Sigmoid colon (tissue), 7 donors: ENCODE measurements at regions of chr4 and their contacts with region 1.

Region 1: DNA sequence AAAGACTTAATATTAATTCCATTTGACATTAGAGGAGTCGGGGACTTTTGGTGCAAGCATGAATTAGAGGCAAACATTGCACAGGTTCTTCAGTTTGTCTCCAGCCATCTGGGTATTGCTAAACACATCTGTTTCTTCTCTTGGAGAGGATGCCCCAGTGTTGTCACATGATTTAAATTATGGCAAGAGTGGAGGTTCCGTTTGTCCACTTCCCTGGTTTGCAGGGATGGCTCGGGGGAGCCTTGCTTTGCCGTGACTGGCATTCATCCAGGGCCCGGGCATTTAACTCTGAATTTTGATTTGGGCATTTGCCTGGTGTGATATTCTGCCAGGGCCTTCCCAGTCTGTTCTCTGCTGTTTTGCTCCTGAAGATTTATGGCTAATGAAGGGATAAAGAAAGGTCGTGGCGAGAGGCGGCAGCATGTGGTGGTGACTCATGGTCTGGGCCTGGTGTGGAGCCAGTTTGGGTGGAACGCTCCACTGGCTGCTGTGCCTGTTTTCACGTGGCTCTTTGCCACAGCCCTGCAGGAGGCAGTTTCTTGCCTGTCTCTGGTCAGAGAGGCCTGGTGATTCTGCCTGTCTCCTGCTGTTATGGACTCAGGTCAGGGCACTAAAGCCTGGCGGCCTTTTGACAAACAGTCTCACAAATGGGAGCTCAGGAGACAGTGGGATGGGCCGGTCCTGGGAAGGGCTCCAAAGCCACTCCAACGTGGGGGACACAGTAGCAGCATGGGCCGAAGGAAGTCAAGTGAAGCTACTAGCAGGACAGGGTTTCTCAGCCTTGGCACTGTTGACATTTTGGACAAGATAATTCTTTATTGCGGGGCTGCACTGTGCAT is 99.4 kb upstream of the PGRMC2 start:
- DNase-seq: peak; percentile 98
- H3K4me3 ChIP-seq: no peak overlapping the region
- H3K27ac ChIP-seq: peak overlapping the region; percentile 82 to 88 (median 84)
- H3K4me1 ChIP-seq: peaks cover 0 to 74% (median 67%) of the 10 kb centered on the region in 4 donors
- H3K27me3 ChIP-seq: no peaks in the 10 kb centered on the region
- CTCF ChIP-seq: no peak
- EP300 ChIP-seq: peak; percentile 44 to 87 (median 72)
- POLR2A ChIP-seq: no peak

Region 2: DNA sequence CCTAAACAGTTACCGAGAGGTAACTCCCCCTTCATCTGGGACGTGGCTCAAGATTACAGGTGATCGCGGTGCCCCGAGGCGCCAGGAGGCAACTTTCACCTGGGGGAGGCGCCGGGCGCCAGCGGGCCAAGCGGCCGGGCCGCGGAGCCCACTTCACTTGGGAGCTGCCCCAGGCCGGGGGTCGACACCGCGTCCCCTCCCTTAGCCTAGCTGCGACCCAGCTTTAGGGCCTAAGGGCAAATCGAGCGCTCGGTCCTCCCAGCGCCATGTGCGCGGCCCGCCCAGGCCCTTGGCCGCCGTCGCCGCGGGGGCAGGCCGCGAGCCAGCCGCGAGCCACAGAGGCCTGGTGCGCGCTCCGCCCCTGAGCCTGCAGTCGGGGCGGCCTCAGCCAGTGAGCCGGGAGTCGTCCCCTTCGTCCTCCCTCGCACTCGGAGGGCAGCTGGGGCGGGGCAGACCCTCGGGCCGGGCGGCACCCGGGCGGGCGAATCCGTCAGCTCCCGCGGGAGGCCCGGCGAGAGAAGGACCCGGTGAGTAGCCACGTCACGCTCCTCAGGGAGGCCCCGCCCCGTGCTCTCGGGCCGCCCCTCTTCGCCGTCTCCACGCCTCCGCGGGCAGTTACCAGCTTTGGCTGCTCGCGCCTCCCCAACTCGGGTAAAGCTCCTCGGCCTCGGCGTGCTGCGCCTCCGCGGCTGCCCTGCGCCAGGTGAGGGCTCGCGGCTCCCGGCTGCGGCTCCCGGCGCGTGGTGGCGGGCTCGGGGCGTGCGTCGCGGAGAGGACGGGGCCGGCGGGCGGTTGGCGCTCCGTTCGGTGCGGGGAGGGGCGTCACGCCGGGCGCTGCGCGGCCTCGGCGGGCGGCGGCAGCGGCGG is 326.0 kb before region 1 on chr4 and contains the start of gene LARP1B:
- intact Hi-C with region 1: loop called (anchors 5 kb)
- DNase-seq: peak; percentile 97
- H3K4me3 ChIP-seq: peak within 1 kb of the TSS; percentile 86 to 92 (median 88)
- H3K27ac ChIP-seq: peak within 1 kb of the TSS; percentile 98
- H3K4me1 ChIP-seq: peaks cover 0 to 28% (median 17%) of the 10 kb centered on the region in 4 donors
- H3K27me3 ChIP-seq: no peaks in the 10 kb centered on the region
- CTCF ChIP-seq: no peak
- EP300 ChIP-seq: no peak
- POLR2A ChIP-seq: peak; percentile 50 to 75
- total RNA-seq, gene LARP1B: 18.2 to 30.3 (median 20.3) TPM

Region 3: DNA sequence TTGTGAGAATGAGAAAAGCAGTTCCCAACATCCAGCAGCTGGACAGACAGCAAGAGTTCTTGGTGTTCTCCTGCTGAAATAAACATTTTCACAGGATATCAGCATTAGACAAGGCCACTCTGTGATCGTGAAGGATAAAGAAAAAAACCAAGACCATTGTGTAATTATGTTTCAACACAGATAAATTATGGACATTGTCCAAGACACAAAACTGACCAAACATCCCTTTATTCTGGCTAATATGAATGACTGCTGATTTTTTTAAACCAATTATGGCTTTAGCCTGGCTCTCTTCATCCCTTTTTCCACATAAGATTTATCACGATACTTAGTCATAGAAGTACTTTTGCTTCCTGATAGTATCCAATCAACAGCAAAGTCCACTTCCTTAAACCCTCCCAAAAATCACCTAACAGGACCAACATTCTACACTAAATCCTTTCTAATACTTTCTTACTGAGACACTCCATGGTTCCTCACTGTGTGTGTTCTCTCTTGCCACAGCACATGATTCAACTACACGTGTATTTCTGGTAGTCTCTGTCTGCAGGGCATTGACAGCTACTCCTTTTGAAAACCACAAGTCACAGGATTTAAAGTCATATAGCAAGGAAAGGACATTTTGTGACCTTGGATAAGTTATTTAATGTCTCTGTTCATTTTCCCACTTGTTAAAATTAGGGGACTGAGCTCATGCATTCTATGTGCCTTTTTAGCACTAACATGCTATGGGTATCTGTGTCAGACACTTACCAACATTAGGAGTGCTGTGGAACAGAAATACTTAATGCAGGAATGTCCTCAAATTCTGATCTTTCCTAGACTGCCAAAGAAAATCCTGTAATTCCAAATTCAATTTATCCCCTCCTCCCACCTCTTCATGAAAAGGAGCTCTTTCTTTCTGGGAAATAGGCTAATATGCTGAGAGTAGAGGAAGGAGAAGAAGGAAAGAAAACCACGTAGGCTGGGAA is 37.8 kb after region 1 on chr4:
- intact Hi-C with region 1: loop called (anchors 2 kb)
- DNase-seq: no peak
- H3K4me3 ChIP-seq: no peak overlapping the region
- H3K27ac ChIP-seq: peak overlapping the region in 3 of 4 donors; percentile 44 to 61 (median 58)
- H3K4me1 ChIP-seq: peaks cover 0 to 15% (median 8%) of the 10 kb centered on the region in 4 donors
- H3K27me3 ChIP-seq: no peaks in the 10 kb centered on the region
- CTCF ChIP-seq: no peak
- EP300 ChIP-seq: no peak
- POLR2A ChIP-seq: no peak

Region 4: DNA sequence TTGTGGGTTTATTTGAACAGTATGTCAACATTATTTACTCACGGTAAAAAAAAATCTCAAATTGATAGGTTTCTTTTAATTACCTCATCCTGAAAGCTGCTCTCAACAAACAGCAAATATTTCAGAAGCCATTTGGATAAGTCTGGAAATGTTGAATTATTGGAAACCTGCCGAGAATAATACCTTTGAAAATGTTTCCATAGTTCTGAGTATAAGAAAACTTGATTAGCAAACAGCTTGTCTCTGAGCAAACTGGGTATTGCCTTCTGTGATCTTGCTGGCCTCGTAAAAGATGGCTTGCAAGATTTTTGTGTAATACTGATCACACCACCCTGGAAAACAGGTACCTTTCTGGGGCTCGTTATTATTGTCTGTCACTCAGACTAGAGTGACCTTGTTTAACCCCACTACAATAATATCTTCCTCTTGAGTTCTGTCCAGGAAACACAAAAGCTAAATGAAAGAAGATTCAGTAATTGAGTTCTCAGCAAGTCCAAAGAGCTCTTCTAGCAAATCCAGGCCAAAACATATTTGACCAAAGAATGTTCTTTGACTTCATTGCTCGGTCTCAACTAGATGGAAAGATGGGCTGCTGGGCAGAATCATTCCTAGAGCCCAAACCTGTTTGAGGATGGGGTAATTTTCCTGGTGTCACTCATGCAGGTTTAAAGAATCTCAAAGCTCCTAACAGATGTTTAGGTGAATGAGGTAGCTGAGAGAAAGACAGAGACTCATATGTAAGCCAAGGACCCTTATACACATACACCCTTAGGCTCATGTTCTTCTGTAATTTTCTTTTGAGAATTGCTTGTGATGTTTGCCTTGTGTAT is 166.9 kb after region 1 on chr4:
- intact Hi-C with region 1: loop called (anchors 2 kb)
- DNase-seq: no peak
- H3K4me3 ChIP-seq: peak overlapping the region; percentile 45 to 58 (median 56)
- H3K27ac ChIP-seq: peak overlapping the region; percentile 91 to 92 (median 92)
- H3K4me1 ChIP-seq: peaks cover 0 to 30% (median 21%) of the 10 kb centered on the region in 4 donors
- H3K27me3 ChIP-seq: no peaks in the 10 kb centered on the region
- CTCF ChIP-seq: no peak
- EP300 ChIP-seq: no peak
- POLR2A ChIP-seq: no peak

Region 5: GRCh38 chr4:128863312-128864075 is 476.5 kb after region 1 on chr4:
- intact Hi-C with region 1: loop called (anchors 5 kb)
- DNase-seq: peak; percentile 88
- H3K4me3 ChIP-seq: no peak overlapping the region
- H3K27ac ChIP-seq: no peak overlapping the region
- H3K4me1 ChIP-seq: peaks cover 0 to 45% (median 37%) of the 10 kb centered on the region in 4 donors
- H3K27me3 ChIP-seq: no peaks in the 10 kb centered on the region
- CTCF ChIP-seq: peak; percentile 50 to 91 (median 84)
- EP300 ChIP-seq: no peak
- POLR2A ChIP-seq: no peak